Aorta (tissue), 5 donors: ENCODE measurements at regions of chr4 and their contacts with region 1.

Region 1: GRCh38 chr4:139301113-139301820 is at the start of gene NAA15:
- DNase-seq: peak; percentile 99
- ATAC-seq: peak; percentile 99
- H3K4me3 ChIP-seq: peak within 1 kb of the TSS; percentile 87 to 95
- H3K27ac ChIP-seq: peak within 1 kb of the TSS; percentile 77 to 97
- H3K4me1 ChIP-seq: no peaks in the 10 kb centered on the region
- H3K27me3 ChIP-seq: no peaks in the 10 kb centered on the region
- total RNA-seq, gene NAA15: 42.8 to 45.4 TPM

Region 2: GRCh38 chr4:139386421-139386820 is 85.2 kb after region 1 on chr4:
- intact Hi-C with region 1: loop called in 1 of 2 experiments (anchors 10 kb)
- DNase-seq: no peak
- ATAC-seq: no peak
- H3K4me3 ChIP-seq: no peak overlapping the region
- H3K27ac ChIP-seq: no peak overlapping the region
- H3K4me1 ChIP-seq: no peaks in the 10 kb centered on the region
- H3K27me3 ChIP-seq: no peaks in the 10 kb centered on the region

Region 3: GRCh38 chr4:139419388-139419914 is 118.2 kb after region 1 on chr4:
- intact Hi-C with region 1: no loop called
- DNase-seq: peak in 1 of 2 donors; percentile 73
- ATAC-seq: peak; percentile 59
- H3K4me3 ChIP-seq: no peak overlapping the region
- H3K27ac ChIP-seq: no peak overlapping the region
- H3K4me1 ChIP-seq: no peaks in the 10 kb centered on the region
- H3K27me3 ChIP-seq: no peaks in the 10 kb centered on the region